ENCODE measurements at regions of chr1 and their contacts with region 1.

Region 1: GRCh38 chr1:199742547-199742946 is 285.0 kb upstream of the NR5A2 start:
- DNase-seq: peak; percentile 89 to 96 (median 94)
- H3K4me3 ChIP-seq: no peak overlapping the region
- H3K4me3 Mint-ChIP-seq: no peak overlapping the region
- H3K27ac ChIP-seq: peak overlapping the region in 1 of 2 donors; percentile 46
- H3K27ac Mint-ChIP-seq: no peak overlapping the region
- H3K4me1 ChIP-seq: peaks cover 24 to 28% of the 10 kb centered on the region in 2 donors
- H3K4me1 Mint-ChIP-seq: peaks cover 12% of the 10 kb centered on the region
- H3K27me3 ChIP-seq: no peaks in the 10 kb centered on the region
- H3K27me3 Mint-ChIP-seq: peaks cover 0 to 2% (median 0%) of the 10 kb centered on the region in 3 donors
- CTCF ChIP-seq: no peak

Region 2: GRCh38 chr1:198929961-198930599 is 812.5 kb before region 1 on chr1:
- intact Hi-C with region 1: loop called in 1 of 2 experiments (anchors 10 kb)
- DNase-seq: peak; percentile 54 to 84 (median 83)
- H3K4me3 ChIP-seq: peak overlapping the region; percentile 38 to 87 (median 80)
- H3K4me3 Mint-ChIP-seq: peak overlapping the region; percentile 71 to 91
- H3K27ac ChIP-seq: peak overlapping the region; percentile 43 to 88
- H3K27ac Mint-ChIP-seq: peak overlapping the region; percentile 86 to 97 (median 94)
- H3K4me1 ChIP-seq: peaks cover 29 to 67% of the 10 kb centered on the region in 2 donors
- H3K4me1 Mint-ChIP-seq: peaks cover 33% of the 10 kb centered on the region
- H3K27me3 ChIP-seq: no peaks in the 10 kb centered on the region
- H3K27me3 Mint-ChIP-seq: no peaks in the 10 kb centered on the region
- CTCF ChIP-seq: no peak

Measured in CD14-positive monocyte (primary cell).